CD8-positive, alpha-beta T cell (primary cell): ENCODE measurements at regions of chr5 and their contacts with region 1.

Region 1: GRCh38 chr5:43551731-43552130 is 5.1 kb downstream of the PAIP1 start:
- DNase-seq: no peak
- ATAC-seq: no peak
- H3K4me3 ChIP-seq: no peak overlapping the region
- H3K4me3 Mint-ChIP-seq: no peak overlapping the region
- H3K27ac ChIP-seq: no peak overlapping the region
- H3K27ac Mint-ChIP-seq: no peak overlapping the region
- H3K4me1 ChIP-seq: peaks cover 47% of the 10 kb centered on the region
- H3K4me1 Mint-ChIP-seq: peaks cover 25% of the 10 kb centered on the region
- H3K27me3 ChIP-seq: no peaks in the 10 kb centered on the region
- H3K27me3 Mint-ChIP-seq: no peaks in the 10 kb centered on the region
- CTCF ChIP-seq: no peak

Region 2: DNA sequence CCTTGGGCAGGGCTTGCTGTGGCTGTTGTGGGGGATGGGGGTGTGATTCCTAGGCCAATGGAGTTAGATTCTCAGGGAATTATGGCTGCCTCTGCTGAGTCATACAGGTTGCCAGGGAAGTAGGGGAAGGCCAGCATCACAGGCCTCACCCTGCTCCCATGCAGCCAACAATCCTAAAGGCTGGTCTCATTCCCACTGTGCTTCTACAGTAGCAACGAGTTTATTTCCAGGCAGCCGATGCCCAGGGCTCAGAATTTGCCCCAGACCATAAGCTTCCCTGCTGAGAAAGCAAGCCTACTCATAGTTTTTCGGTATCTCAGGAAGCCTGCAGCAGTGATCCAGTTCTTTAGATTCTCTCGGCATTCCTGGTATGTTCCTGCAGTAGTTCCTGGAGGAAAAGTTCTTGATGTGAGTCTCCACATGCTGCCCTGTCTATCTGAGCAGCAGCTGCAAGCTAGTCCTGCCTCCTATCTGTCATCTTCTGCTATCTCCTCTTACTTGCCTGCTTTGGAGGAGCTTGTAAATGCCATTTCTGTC is 680.8 kb before region 1 on chr5:
- CTCF ChIA-PET with region 1: no interaction called
- POLR2A ChIA-PET with region 1: no interaction called
- intact Hi-C with region 1: no loop called
- DNase-seq: no peak
- ATAC-seq: no peak
- H3K4me3 ChIP-seq: no peak overlapping the region
- H3K4me3 Mint-ChIP-seq: no peak overlapping the region
- H3K27ac ChIP-seq: no peak overlapping the region
- H3K27ac Mint-ChIP-seq: no peak overlapping the region
- H3K4me1 ChIP-seq: peaks cover 5% of the 10 kb centered on the region
- H3K4me1 Mint-ChIP-seq: peaks cover 3% of the 10 kb centered on the region
- H3K27me3 ChIP-seq: no peaks in the 10 kb centered on the region
- H3K27me3 Mint-ChIP-seq: peaks cover 19% of the 10 kb centered on the region
- CTCF ChIP-seq: no peak

Region 3: DNA sequence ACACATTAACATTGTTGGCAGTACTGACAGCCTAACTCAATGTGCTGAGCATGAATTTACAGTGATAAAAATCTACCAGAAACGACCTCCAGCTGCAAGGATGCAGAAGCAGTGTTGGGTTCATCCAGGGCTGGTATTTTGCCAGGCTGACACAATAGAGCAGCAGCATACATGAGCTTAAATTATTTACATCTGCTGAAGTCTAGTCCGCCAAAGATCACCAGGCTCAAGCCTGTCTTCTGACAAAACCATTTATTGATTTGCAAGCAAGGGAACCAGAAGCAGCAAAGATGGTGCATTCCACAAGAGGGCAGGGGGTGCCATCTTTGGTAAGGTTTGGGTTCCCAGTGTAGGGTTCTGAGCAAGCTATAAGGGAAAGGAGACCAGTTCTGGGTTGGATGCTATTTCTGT is 28.1 kb before region 1 on chr5:
- CTCF ChIA-PET with region 1: interaction called, 3 read pairs
- POLR2A ChIA-PET with region 1: interaction called, 3 read pairs
- intact Hi-C with region 1: loop called in 1 of 2 experiments (anchors 2 kb)
- DNase-seq: no peak
- ATAC-seq: no peak
- H3K4me3 ChIP-seq: no peak overlapping the region
- H3K4me3 Mint-ChIP-seq: no peak overlapping the region
- H3K27ac ChIP-seq: no peak overlapping the region
- H3K27ac Mint-ChIP-seq: no peak overlapping the region
- H3K4me1 ChIP-seq: no peaks in the 10 kb centered on the region
- H3K4me1 Mint-ChIP-seq: no peaks in the 10 kb centered on the region
- H3K27me3 ChIP-seq: no peaks in the 10 kb centered on the region
- H3K27me3 Mint-ChIP-seq: no peaks in the 10 kb centered on the region
- CTCF ChIP-seq: no peak